ENCODE measurements at regions of chr15 and their contacts with region 1.

Region 1: GRCh38 chr15:65028921-65029735 is at the start of gene MTFMT:
- DNase-seq: peak; percentile 96
- ATAC-seq: peak; percentile 95
- H3K4me3 Mint-ChIP-seq: peak within 1 kb of the TSS; percentile 85
- H3K27ac Mint-ChIP-seq: peak within 1 kb of the TSS; percentile 79
- H3K4me1 Mint-ChIP-seq: peaks cover 20% of the 10 kb centered on the region
- H3K27me3 Mint-ChIP-seq: no peaks in the 10 kb centered on the region
- total RNA-seq, gene MTFMT: 19.0 to 19.9 TPM

Region 2: GRCh38 chr15:64836023-64836536 is 193.0 kb before region 1 on chr15:
- CTCF ChIA-PET with region 1: no interaction called
- POLR2A ChIA-PET with region 1: no interaction called
- intact Hi-C with region 1: loop called in 1 of 2 experiments (anchors 5 kb)
- DNase-seq: no peak
- ATAC-seq: peak; percentile 4
- H3K4me3 Mint-ChIP-seq: peak overlapping the region; percentile 56
- H3K27ac Mint-ChIP-seq: peak overlapping the region; percentile 30
- H3K4me1 Mint-ChIP-seq: peaks cover 43% of the 10 kb centered on the region
- H3K27me3 Mint-ChIP-seq: no peaks in the 10 kb centered on the region

Region 3: GRCh38 chr15:65049418-65049840 is 20.3 kb after region 1 on chr15:
- CTCF ChIA-PET with region 1: interaction called, 10 read pairs
- POLR2A ChIA-PET with region 1: no interaction called
- intact Hi-C with region 1: loop called in 1 of 2 experiments (anchors 1 kb)
- DNase-seq: peak; percentile 94
- ATAC-seq: peak; percentile 98
- H3K4me3 Mint-ChIP-seq: peak overlapping the region; percentile 8
- H3K27ac Mint-ChIP-seq: no peak overlapping the region
- H3K4me1 Mint-ChIP-seq: peaks cover 16% of the 10 kb centered on the region
- H3K27me3 Mint-ChIP-seq: peaks cover 2% of the 10 kb centered on the region

Region 4: DNA sequence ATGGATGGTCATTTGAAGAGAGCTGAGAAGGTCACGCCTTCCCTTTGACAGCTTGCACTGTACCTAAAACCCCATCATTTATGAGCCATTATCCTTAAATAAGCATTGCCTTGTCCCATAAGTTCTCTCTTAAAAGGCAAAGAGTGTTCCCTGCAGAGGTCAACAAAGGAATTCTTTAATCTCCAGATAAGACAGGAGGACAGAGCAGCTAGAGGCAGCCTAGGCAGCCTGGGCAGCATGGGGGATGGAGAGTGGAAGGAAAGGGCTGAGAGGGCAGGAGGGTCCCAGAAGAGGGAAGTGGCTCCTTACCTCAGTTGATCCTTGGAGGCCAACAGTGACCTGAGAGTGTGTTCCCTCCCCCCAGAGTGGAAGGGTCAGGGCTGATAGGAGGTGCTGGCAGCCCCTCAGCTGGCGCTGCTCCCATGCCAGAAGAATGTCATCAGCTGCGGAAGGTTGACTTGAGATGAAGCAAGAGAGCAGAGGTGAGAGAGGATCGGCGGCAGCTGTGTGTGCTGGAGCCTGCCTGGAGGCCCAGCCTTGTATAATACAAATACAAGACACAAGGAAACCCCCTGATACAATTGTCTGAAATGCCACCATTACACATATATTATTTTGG is 60.2 kb after region 1 on chr15:
- CTCF ChIA-PET with region 1: no interaction called
- POLR2A ChIA-PET with region 1: no interaction called
- intact Hi-C with region 1: no loop called
- DNase-seq: no peak
- ATAC-seq: no peak
- H3K4me3 Mint-ChIP-seq: no peak overlapping the region
- H3K27ac Mint-ChIP-seq: no peak overlapping the region
- H3K4me1 Mint-ChIP-seq: no peaks in the 10 kb centered on the region
- H3K27me3 Mint-ChIP-seq: no peaks in the 10 kb centered on the region

Region 5: DNA sequence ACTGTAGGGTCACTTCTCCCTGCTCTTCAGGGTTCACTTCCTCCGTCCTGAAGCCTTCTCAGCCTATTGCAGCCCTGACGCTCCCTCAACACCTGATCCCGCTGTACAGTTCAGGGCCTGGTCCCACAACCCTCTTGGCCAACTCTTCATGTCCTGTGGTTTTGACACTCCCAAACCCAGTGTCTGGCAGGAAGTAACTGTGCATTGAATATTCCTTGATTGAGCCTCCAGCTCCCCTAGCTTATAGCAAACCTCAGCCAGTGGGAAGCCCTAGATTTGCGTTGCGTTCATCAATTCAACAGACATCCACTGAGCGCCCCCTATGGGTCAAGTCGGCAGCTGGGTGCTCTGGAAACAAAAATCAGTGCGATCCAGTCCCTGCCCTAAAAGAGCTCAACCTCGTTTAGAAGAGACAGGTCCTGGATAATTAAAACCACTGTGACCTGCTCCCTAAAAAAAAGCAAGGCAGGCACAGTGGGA is 72.3 kb after region 1 on chr15:
- CTCF ChIA-PET with region 1: interaction called, 3 read pairs
- POLR2A ChIA-PET with region 1: no interaction called
- intact Hi-C with region 1: loop called in 1 of 2 experiments (anchors 1 kb)
- DNase-seq: peak; percentile 82
- ATAC-seq: peak; percentile 69
- H3K4me3 Mint-ChIP-seq: no peak overlapping the region
- H3K27ac Mint-ChIP-seq: no peak overlapping the region
- H3K4me1 Mint-ChIP-seq: peaks cover 2% of the 10 kb centered on the region
- H3K27me3 Mint-ChIP-seq: no peaks in the 10 kb centered on the region

Region 6: DNA sequence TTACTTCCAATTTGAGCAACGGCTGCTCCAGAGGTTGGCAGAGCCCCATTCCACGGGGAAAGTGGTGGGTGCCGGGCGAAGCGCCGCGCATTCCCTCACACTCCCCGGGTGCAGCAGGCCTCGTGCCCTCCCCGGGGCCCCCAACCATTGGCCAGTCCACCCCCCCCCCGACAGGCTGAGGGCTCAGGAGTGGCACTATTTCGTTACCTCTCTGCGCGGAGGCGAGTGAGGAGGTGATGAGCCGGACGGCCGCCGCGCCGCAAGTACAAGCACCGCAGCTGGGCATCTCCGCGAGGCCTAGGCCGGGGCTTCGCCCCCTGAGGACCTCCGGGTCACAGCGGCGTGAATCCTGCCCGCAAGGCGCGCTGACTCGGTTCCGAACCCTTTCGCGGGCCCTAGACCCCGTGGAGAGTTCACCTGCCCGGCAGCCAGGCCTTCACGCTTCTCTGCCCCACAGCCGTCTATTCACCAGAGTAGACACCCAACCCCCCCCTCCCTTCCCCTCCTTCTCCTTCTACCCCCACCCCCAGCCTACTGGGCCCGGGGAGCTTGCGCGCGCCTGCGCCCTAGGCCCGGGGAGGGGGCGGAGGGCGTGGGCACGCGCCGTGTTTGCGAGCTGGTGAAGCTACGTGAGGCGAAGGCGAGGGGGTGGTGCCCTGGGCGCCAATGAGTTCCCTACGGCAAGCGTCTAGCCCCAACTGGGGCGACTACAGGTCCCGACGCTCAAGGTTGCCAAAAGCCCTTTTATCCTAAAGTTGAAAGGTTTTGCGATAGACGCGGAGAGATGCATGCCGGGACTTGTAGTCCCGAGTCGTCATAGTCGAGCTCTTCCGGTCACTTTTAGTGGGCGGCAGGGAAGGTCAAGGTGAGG is 156.0 kb after region 1 on chr15 and contains the start of gene CLPX:
- CTCF ChIA-PET with region 1: no interaction called
- POLR2A ChIA-PET with region 1: no interaction called
- intact Hi-C with region 1: loop called in 1 of 2 experiments (anchors 1 kb)
- DNase-seq: peak; percentile 95
- ATAC-seq: peak; percentile 93
- H3K4me3 Mint-ChIP-seq: peak within 1 kb of the TSS; percentile 92
- H3K27ac Mint-ChIP-seq: peak within 1 kb of the TSS; percentile 89
- H3K4me1 Mint-ChIP-seq: peaks cover 28% of the 10 kb centered on the region
- H3K27me3 Mint-ChIP-seq: no peaks in the 10 kb centered on the region
- total RNA-seq, gene CLPX: 65.2 to 73.7 TPM

Region 7: GRCh38 chr15:65298731-65299130 is 269.6 kb after region 1 on chr15:
- CTCF ChIA-PET with region 1: interaction called, 4 read pairs
- POLR2A ChIA-PET with region 1: interaction called, 5 read pairs
- intact Hi-C with region 1: loop called (anchors 1 to 5 kb)
- DNase-seq: peak; percentile 21
- ATAC-seq: no peak
- H3K4me3 Mint-ChIP-seq: peak overlapping the region; percentile 81
- H3K27ac Mint-ChIP-seq: peak overlapping the region; percentile 97
- H3K4me1 Mint-ChIP-seq: peaks cover 49% of the 10 kb centered on the region
- H3K27me3 Mint-ChIP-seq: no peaks in the 10 kb centered on the region